Activated CD4-positive, alpha-beta T cell treated with anti-CD3 and anti-CD28 coated beads for 36 hours (primary cell): ENCODE measurements at regions of chr11 and their contacts with region 1.

Region 1: GRCh38 chr11:73750228-73750627 is 10.6 kb downstream of the RAB6A start:
- DNase-seq: no peak
- ATAC-seq: no peak
- H3K4me3 Mint-ChIP-seq: no peak overlapping the region
- H3K27ac Mint-ChIP-seq: no peak overlapping the region
- H3K4me1 Mint-ChIP-seq: peaks cover 43% of the 10 kb centered on the region
- H3K27me3 Mint-ChIP-seq: no peaks in the 10 kb centered on the region

Region 2: DNA sequence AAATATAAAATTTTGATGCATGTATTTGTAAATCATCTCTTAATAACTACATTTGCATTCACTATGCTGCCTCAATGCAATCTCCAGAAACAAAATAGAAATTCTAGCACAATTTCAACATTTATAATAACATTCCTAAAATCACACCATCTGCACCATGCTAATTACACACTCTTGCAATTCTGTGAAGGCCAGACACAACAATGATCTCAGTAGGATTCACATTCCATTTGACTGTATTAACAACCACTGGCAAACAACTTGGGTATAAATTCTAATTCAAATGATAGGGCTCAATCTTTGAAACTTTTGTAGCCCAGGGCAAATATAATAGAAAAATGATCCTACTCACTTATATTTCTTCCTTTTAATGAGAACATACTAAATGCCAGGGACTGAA is 15.2 kb before region 1 on chr11:
- CTCF ChIA-PET with region 1: no interaction called
- POLR2A ChIA-PET with region 1: no interaction called
- intact Hi-C with region 1: loop called in 1 of 2 experiments (anchors 2 kb)
- DNase-seq: no peak
- ATAC-seq: no peak
- H3K4me3 Mint-ChIP-seq: no peak overlapping the region
- H3K27ac Mint-ChIP-seq: no peak overlapping the region
- H3K4me1 Mint-ChIP-seq: peaks cover 11% of the 10 kb centered on the region
- H3K27me3 Mint-ChIP-seq: no peaks in the 10 kb centered on the region